Posterior cingulate gyrus (tissue), 11 donors: ENCODE measurements at regions of chrX and their contacts with region 1.

Region 1: GRCh38 chrX:38803586-38804431 is 2.5 kb downstream of the MID1IP1 start:
- DNase-seq: peak; percentile 73 to 98 (median 82)

Region 2: GRCh38 chrX:38985375-38985774 is 181.6 kb after region 1 on chrX:
- intact Hi-C with region 1: loop called (anchors 5 kb)
- DNase-seq: no peak

Region 3: GRCh38 chrX:39149761-39150160 is 346.0 kb after region 1 on chrX:
- intact Hi-C with region 1: loop called (anchors 1 kb)
- DNase-seq: peak in 9 of 10 donors; percentile 28 to 93 (median 64)

Region 4: GRCh38 chrX:39396358-39396995 is 592.7 kb after region 1 on chrX:
- intact Hi-C with region 1: no loop called
- DNase-seq: peak in 1 of 10 donors; percentile 84

Region 5: DNA sequence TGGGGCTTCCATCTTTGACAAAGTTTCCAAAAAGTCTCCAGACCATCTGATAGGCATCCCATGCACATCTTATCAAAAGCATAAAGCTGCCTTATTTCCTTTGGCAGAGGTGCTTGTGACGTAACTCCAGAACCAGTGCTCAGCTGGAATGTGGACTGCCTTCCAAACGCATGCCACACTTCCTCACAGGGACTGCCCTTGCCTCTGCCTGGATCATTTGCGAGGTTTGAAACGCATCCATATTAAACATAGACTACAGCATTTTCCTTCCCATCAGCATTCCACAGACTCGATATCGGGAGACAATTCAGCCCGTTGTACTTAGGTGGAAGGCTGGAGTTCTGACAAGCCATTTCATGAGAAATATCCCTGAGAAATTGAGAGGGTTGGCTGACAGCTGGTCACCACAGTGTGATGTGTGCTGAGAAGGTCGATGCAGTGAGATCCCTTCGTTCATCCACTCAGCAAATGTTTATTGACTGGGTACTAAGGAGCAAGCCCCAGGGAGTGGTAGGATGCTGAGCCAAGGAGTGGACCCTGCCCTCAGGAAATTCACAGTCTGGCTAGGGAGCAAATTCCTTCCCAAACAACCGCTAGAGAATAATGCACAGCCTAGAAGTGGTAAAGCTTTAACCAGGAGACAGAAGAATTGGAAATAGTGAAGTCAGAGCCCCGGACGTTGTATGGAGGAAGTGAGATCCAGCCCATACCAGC is 917.9 kb after region 1 on chrX:
- intact Hi-C with region 1: no loop called
- DNase-seq: no peak